ENCODE measurements at regions of chr10 and their contacts with region 1.

Region 1: DNA sequence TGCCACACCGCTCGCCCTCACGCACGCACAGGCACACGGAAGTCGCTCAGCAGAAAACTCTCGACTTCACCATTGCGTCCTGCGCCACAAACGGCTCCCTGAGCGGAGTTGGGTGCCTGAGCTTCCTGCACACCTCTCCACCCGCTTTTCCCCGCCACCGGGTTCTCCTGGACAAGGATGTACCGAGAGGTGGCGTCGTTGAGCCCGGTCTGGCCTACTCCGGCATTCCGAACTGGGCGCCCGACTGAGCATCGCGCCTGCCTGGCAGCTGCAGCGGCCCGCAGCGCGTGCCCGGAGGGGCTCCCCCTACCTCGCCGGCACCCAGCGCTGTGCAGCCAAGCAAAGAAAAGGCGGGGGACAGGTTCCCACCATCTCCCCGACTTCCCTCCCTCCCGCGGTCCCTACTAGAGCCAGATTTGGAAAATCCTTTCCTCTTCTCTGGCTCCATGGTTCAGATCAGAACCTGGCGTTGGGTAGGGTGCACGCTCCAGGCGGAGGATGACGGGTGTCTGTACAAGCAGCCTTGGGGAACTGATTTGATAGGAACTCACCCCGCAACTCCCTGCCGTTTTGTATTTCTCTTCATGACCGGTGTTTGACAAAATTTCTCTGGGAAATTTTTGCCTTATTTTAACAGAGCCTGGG is 1.7 kb downstream of the SORCS3 start:
- ATAC-seq: peak; percentile 48 to 75 (median 62)
- H3K4me3 ChIP-seq: peak overlapping the region; percentile 66 to 92 (median 77)
- H3K27ac ChIP-seq: peak overlapping the region in 1 of 2 donors; percentile 48
- H3K4me1 ChIP-seq: peaks cover 29 to 38% of the 10 kb centered on the region in 2 donors

Region 2: DNA sequence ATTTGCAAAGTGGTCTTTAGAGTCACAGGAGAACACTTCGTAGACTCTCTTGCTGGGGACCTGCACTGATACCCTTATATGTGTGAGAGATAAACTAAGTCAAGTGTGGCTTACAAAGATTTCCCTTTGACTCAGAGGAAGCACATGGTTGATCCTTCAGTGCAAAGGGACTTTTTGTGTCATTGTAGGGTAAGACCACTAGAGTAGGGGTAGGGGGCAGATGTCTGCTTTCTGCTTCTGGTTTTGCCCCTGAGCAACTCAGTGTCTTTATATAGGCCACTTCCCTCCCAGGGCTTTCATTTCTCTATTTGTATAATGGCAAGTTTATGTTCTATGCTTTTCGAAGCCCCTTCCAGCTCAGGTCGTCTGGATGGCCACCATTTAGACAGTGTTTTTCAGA is 280.0 kb after region 1 on chr10:
- in situ Hi-C with region 1: loop called in 1 of 9 experiments (anchors 25 kb)
- ATAC-seq: no peak
- H3K4me3 ChIP-seq: no peak overlapping the region
- H3K27ac ChIP-seq: no peak overlapping the region
- H3K4me1 ChIP-seq: peaks cover 10 to 19% of the 10 kb centered on the region in 2 donors

Region 3: DNA sequence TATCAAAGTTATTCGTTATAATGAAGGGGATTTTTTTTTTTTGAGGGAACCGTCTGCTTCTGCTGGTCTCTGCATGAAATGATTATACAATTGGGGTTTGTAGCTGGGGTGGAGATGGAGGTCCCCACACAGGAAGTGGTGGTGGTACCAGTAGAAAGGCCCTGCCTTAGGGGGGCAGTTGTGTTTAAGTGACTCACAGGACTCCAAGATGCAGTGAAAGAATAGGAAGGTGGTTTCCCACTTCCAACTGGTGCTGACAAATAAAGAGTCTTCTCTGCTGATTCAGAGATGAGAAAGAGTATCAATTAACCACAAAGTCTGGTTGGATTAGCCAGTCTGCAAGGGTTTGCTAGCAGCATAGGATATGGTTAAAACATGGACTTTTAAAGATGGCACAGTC is 374.3 kb after region 1 on chr10:
- in situ Hi-C with region 1: no loop called
- ATAC-seq: no peak
- H3K4me3 ChIP-seq: no peak overlapping the region
- H3K27ac ChIP-seq: no peak overlapping the region
- H3K4me1 ChIP-seq: no peaks in the 10 kb centered on the region